ENCODE measurements at regions of chr2 and their contacts with region 1.

Region 1: DNA sequence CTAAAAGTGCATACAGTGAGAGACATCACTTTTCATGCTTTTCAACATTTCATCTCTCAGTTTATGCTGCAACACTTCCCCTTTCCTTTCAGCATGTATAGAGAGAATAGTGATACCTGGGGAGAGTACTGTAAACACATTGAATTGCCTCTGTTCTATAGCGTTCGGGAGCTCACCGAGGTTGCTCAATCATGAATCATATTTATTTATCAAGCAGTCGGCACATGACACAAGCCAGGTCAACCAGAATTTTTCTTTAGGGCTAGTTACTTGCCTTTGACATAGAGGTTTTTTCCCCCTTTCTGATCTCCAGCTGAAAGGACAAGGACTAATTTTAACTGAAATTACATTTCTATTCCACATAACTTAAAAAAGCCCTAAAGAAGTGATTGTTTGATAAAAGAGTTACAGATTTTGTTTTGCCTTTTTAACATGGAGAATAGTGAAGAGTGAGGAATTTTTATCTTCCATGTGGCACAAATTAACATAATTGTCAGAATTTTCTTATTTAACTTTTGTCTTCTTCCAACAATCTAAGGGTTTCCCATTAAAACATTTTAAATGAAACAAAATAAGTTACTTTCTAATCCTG is 690.9 kb upstream of the TMEFF2 start:
- DNase-seq: peak; percentile 20
- H3K4me3 Mint-ChIP-seq: peak overlapping the region; percentile 5
- H3K27ac Mint-ChIP-seq: peak overlapping the region; percentile 35
- H3K4me1 Mint-ChIP-seq: peaks cover 30% of the 10 kb centered on the region
- H3K27me3 Mint-ChIP-seq: no peaks in the 10 kb centered on the region
- CTCF ChIP-seq: no peak

Region 2: DNA sequence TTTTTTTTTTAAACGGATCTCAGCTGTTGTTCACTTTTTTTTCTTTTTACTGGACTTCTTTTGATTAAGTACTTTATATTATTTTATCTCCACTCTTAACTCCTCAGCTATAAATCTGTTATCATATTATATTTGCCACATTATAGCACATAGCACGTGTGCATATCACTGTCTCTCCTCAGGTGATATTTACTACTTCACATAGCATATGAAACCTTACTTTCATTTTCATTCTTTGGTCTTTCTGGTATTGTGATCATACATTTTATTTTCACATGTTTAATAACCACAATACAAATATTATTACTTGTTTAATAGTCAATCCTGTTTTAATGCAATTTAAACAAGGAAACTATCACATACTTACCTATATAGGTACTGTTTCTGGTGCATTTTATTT is 302.2 kb after region 1 on chr2:
- CTCF ChIA-PET with region 1: no interaction called
- intact Hi-C with region 1: loop called (anchors 10 kb)
- DNase-seq: no peak
- H3K4me3 Mint-ChIP-seq: peak overlapping the region; percentile 62
- H3K27ac Mint-ChIP-seq: peak overlapping the region; percentile 93
- H3K4me1 Mint-ChIP-seq: peaks cover 12% of the 10 kb centered on the region
- H3K27me3 Mint-ChIP-seq: no peaks in the 10 kb centered on the region
- CTCF ChIP-seq: no peak

Measured in Calu3 (cell line).